Activated naive CD4-positive, alpha-beta T cell treated with anti-CD3 and anti-CD28 coated beads, Interleukin-2, amount 10 ng/mL, durations not matched to agents 7 days and 5 days (primary cell): ENCODE measurements at regions of chr2 and their contacts with region 1.

Region 1: GRCh38 chr2:75608684-75609333 is 37.8 kb upstream of the MRPL19 start:
- DNase-seq: peak; percentile 59
- H3K4me3 Mint-ChIP-seq: no peak overlapping the region
- H3K27ac Mint-ChIP-seq: no peak overlapping the region
- H3K4me1 Mint-ChIP-seq: no peaks in the 10 kb centered on the region
- H3K27me3 Mint-ChIP-seq: peaks cover 72% of the 10 kb centered on the region

Region 2: GRCh38 chr2:75466708-75467311 is 142.0 kb before region 1 on chr2:
- CTCF ChIA-PET with region 1: interaction called, 52 read pairs
- DNase-seq: peak; percentile 22
- H3K4me3 Mint-ChIP-seq: no peak overlapping the region
- H3K27ac Mint-ChIP-seq: no peak overlapping the region
- H3K4me1 Mint-ChIP-seq: no peaks in the 10 kb centered on the region
- H3K27me3 Mint-ChIP-seq: peaks cover 4% of the 10 kb centered on the region

Region 3: DNA sequence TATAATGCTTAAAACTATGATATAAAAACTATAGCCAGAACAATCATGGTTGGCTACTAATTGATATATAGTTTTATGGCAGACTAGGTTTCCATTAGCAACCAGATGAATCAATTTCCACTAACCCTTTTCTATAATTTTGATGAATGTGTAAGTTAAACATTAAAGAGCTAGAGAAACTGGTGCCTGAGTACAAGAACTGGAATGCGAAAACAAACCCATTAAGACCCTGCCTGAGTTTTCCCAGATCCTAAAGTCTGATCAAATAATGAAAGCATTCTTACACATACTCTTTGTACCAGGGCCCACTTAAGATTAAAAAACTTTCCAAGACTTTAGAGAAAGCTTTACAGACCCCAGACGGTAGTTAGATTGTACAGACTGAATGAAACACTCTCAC is 59.1 kb after region 1 on chr2:
- CTCF ChIA-PET with region 1: no interaction called
- DNase-seq: no peak
- H3K4me3 Mint-ChIP-seq: no peak overlapping the region
- H3K27ac Mint-ChIP-seq: no peak overlapping the region
- H3K4me1 Mint-ChIP-seq: no peaks in the 10 kb centered on the region
- H3K27me3 Mint-ChIP-seq: no peaks in the 10 kb centered on the region